ENCODE measurements at regions of chr11 and their contacts with region 1.

Region 1: DNA sequence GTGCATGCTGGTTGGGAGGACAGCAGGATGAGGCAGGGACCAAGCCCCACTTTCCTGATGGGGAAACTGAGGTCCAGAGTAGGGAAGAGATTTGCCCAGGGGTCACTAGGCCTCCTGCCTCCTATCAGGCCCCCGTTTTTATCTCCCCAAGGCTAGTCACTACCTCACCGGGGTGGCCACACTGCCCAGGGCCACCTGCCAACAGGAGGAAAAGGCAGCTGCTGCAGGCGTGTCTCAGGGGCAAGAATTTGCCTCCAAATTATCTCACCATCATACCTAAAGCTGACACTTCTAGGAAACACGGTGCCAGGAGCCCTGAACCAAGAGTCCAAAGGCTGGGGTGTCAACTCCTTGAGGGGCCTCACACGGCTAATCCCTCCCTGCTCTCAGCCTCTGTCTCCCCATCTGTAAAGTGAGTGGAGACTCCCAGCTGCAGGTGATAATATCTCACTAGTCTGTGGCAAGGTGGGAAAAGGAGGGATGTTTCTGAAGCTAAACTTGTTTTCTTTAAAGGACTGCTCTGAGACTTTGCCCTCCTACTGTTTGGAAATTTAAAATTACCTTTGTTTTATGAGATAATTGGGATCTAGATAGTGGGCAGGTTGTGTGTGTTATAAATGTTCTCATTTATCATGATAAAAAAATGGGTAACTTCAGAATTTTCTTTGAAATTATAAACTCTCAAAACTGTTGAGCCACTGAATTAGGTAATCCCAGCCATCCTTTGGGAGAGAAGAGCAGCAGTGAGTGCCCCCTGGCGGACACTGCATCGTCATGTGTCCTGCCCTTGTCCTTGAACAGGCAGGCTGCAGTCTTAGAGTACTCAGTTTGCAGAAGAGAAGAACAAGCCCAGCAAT is 60.0 kb downstream of the MYO7A start:
- DNase-seq: peak; percentile 82 to 92 (median 89)
- H3K4me3 ChIP-seq: no peak overlapping the region
- H3K27ac ChIP-seq: no peak overlapping the region
- H3K4me1 ChIP-seq: no peaks in the 10 kb centered on the region
- H3K27me3 ChIP-seq: no peaks in the 10 kb centered on the region
- CTCF ChIP-seq: peak; percentile 72 to 89 (median 80)
- EP300 ChIP-seq: no peak
- POLR2A ChIP-seq: no peak

Region 2: GRCh38 chr11:77047007-77047927 is 140.7 kb before region 1 on chr11:
- intact Hi-C with region 1: loop called in 2 of 4 experiments (anchors 5 to 10 kb)
- DNase-seq: peak; percentile 58 to 87 (median 76)
- H3K4me3 ChIP-seq: peak overlapping the region; percentile 35
- H3K27ac ChIP-seq: no peak overlapping the region
- H3K4me1 ChIP-seq: peaks cover 4% of the 10 kb centered on the region
- H3K27me3 ChIP-seq: no peaks in the 10 kb centered on the region
- CTCF ChIP-seq: peak; percentile 61 to 83 (median 82)
- EP300 ChIP-seq: no peak
- POLR2A ChIP-seq: no peak

Region 3: DNA sequence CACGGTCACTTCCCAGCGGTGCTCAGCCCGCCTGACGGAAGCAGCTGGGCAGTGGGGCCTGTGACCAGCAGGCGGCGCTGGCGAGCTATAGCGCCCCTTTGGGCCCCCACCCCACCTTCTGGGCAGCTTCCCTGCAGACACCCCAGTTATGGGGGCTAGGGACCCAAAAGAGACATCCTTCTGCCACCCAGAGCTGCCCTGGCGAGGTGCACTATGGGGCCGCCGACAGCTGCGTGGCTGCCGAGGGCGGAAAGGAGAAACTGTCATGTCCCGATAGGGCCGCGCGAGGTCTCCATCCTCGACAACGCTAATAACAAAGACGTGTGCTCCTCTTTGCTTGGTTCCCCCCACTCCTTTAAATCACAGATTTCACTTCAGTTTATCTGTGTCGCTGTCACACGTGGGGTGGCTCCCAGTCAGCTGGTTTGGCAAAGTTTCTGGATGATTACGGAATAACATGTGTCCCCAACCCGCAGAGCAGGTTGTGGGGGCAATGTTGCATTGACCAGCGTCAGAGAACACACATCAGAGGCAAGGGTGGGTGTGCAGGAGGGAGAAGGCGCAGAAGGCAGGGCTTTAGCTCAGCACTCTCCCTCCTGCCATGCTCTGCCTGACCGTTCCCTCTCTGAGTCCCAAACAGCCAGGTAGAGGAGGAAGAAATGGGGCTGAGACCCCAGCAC is 60.6 kb before region 1 on chr11:
- intact Hi-C with region 1: loop called (anchors 1 to 5 kb)
- DNase-seq: peak; percentile 71 to 85 (median 81)
- H3K4me3 ChIP-seq: peak overlapping the region; percentile 41
- H3K27ac ChIP-seq: peak overlapping the region; percentile 50 to 59
- H3K4me1 ChIP-seq: peaks cover 14% of the 10 kb centered on the region
- H3K27me3 ChIP-seq: no peaks in the 10 kb centered on the region
- CTCF ChIP-seq: peak; percentile 99 to 100 (median 99)
- EP300 ChIP-seq: no peak
- POLR2A ChIP-seq: no peak

Region 4: GRCh38 chr11:77287615-77288273 is 99.7 kb after region 1 on chr11:
- intact Hi-C with region 1: no loop called
- DNase-seq: no peak
- H3K4me3 ChIP-seq: no peak overlapping the region
- H3K27ac ChIP-seq: no peak overlapping the region
- H3K4me1 ChIP-seq: no peaks in the 10 kb centered on the region
- H3K27me3 ChIP-seq: no peaks in the 10 kb centered on the region
- CTCF ChIP-seq: no peak
- EP300 ChIP-seq: no peak
- POLR2A ChIP-seq: no peak

Region 5: GRCh38 chr11:77547863-77548551 is 360.0 kb after region 1 on chr11:
- intact Hi-C with region 1: loop called in 2 of 4 experiments (anchors 5 to 10 kb)
- DNase-seq: peak in 2 of 5 donors; percentile 20 to 59
- H3K4me3 ChIP-seq: no peak overlapping the region
- H3K27ac ChIP-seq: peak overlapping the region; percentile 11 to 39
- H3K4me1 ChIP-seq: peaks cover 2% of the 10 kb centered on the region
- H3K27me3 ChIP-seq: no peaks in the 10 kb centered on the region
- CTCF ChIP-seq: peak; percentile 65 to 75 (median 73)
- EP300 ChIP-seq: no peak
- POLR2A ChIP-seq: no peak

Region 6: GRCh38 chr11:77557554-77557953 is 369.6 kb after region 1 on chr11:
- intact Hi-C with region 1: loop called in 2 of 4 experiments (anchors 5 to 10 kb)
- DNase-seq: no peak
- H3K4me3 ChIP-seq: no peak overlapping the region
- H3K27ac ChIP-seq: no peak overlapping the region
- H3K4me1 ChIP-seq: no peaks in the 10 kb centered on the region
- H3K27me3 ChIP-seq: no peaks in the 10 kb centered on the region
- CTCF ChIP-seq: no peak
- EP300 ChIP-seq: no peak
- POLR2A ChIP-seq: no peak

Region 7: DNA sequence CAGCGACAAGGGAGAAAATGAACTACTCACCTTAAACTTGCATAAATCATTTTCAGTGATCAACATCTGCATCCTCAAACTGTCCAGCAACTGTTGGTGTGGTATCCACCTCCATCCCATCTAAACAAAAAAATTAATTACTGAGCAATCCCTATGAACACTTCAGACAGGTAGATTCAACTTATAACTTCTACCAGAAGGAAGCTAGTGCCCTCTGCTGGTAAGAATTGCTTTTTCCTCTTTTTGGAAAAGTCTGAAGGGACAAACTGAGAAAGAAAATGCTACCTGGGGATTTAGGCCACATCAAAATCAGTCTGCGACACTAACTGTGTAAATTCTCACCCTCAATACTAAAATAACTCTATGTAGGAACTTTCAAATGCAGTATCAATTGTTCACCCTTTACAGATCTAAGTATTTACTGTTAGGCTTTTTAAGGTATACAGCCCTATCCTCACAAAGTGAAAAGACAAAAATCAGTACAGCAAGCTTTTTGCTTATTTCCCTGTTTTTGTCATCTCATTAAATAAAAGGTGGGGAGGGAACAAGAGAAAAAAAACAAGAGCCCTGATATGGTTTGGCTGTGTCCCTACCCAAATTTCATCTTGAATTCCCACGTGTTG is 431.7 kb after region 1 on chr11:
- intact Hi-C with region 1: loop called in 2 of 4 experiments (anchors 5 to 10 kb)
- DNase-seq: no peak
- H3K4me3 ChIP-seq: no peak overlapping the region
- H3K27ac ChIP-seq: no peak overlapping the region
- H3K4me1 ChIP-seq: peaks cover 2% of the 10 kb centered on the region
- H3K27me3 ChIP-seq: no peaks in the 10 kb centered on the region
- CTCF ChIP-seq: peak; percentile 33 to 74 (median 68)
- EP300 ChIP-seq: no peak
- POLR2A ChIP-seq: no peak

Measured in ovary (tissue), 10 donors.